CD8-positive, alpha-beta memory T cell (primary cell): ENCODE measurements at regions of chr3 and their contacts with region 1.

Region 1: GRCh38 chr3:186617038-186617946 is 4.4 kb downstream of the AHSG start:
- DNase-seq: peak; percentile 76 to 89 (median 79)
- H3K4me3 ChIP-seq: no peak overlapping the region
- H3K4me3 Mint-ChIP-seq: peak overlapping the region; percentile 16 to 84 (median 68)
- H3K27ac ChIP-seq: no peak overlapping the region
- H3K27ac Mint-ChIP-seq: peak overlapping the region in 3 of 8 donors; percentile 51 to 71 (median 63)
- H3K4me1 ChIP-seq: peaks cover 13% of the 10 kb centered on the region
- H3K4me1 Mint-ChIP-seq: peaks cover 19 to 25% (median 21%) of the 10 kb centered on the region in 3 donors
- H3K27me3 ChIP-seq: peaks cover 15% of the 10 kb centered on the region
- H3K27me3 Mint-ChIP-seq: peaks cover 20 to 42% of the 10 kb centered on the region in 2 donors

Region 2: GRCh38 chr3:185942907-185943759 is 674.2 kb before region 1 on chr3:
- CTCF ChIA-PET with region 1: interaction called, 14 read pairs
- POLR2A ChIA-PET with region 1: interaction called, 3 read pairs
- DNase-seq: peak; percentile 77 to 86 (median 79)
- H3K4me3 ChIP-seq: peak overlapping the region; percentile 26
- H3K4me3 Mint-ChIP-seq: peak overlapping the region; percentile 8 to 71 (median 55)
- H3K27ac ChIP-seq: no peak overlapping the region
- H3K27ac Mint-ChIP-seq: peak overlapping the region in 7 of 8 donors; percentile 5 to 74 (median 62)
- H3K4me1 ChIP-seq: peaks cover 7% of the 10 kb centered on the region
- H3K4me1 Mint-ChIP-seq: peaks cover 13 to 24% (median 18%) of the 10 kb centered on the region in 3 donors
- H3K27me3 ChIP-seq: no peaks in the 10 kb centered on the region
- H3K27me3 Mint-ChIP-seq: peaks cover 5 to 12% of the 10 kb centered on the region in 2 donors

Region 3: DNA sequence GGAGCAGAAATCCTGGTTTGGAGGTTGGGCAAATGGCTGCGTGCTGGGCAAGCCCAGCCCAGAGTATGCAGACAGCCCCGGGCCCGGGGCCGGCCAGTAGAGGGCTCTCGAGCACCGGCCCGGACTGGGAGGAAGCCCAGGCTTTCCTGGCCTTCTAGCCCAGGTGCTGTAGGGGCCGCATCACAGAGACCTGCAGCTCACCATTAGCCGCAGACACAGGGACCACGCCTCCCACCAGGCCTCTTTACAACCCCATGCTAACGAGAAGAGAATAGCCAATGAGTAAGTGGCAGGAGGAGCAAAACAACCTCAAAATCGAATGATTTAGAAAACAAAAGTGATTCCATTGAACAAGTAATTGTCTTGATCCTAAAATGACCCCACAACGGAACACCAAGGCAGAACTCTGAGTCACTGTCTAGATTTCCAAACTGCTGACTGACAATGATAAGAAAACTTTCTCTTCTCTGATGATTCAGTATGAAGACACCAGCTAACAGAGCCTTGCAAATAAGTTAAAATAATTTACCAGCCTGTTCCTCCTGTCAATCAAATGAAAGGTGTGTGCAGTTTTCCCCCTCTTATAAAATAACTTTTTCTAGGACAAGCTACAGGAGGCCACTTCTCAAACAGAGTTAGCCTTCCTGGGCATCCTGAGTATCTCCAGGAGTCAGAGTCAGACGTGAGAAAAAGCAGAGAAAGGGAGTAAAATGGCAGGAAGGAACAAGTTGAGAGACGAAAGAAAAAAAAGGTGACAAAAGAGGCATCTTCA is 357.5 kb before region 1 on chr3:
- CTCF ChIA-PET with region 1: interaction called, 13 read pairs
- POLR2A ChIA-PET with region 1: no interaction called
- DNase-seq: peak; percentile 37 to 72 (median 50)
- H3K4me3 ChIP-seq: no peak overlapping the region
- H3K4me3 Mint-ChIP-seq: peak overlapping the region in 3 of 7 donors; percentile 30 to 56 (median 44)
- H3K27ac ChIP-seq: no peak overlapping the region
- H3K27ac Mint-ChIP-seq: peak overlapping the region in 4 of 8 donors; percentile 25 to 84 (median 56)
- H3K4me1 ChIP-seq: peaks cover 4% of the 10 kb centered on the region
- H3K4me1 Mint-ChIP-seq: peaks cover 8 to 13% (median 11%) of the 10 kb centered on the region in 3 donors
- H3K27me3 ChIP-seq: no peaks in the 10 kb centered on the region
- H3K27me3 Mint-ChIP-seq: peaks cover 2 to 4% of the 10 kb centered on the region in 2 donors

Region 4: DNA sequence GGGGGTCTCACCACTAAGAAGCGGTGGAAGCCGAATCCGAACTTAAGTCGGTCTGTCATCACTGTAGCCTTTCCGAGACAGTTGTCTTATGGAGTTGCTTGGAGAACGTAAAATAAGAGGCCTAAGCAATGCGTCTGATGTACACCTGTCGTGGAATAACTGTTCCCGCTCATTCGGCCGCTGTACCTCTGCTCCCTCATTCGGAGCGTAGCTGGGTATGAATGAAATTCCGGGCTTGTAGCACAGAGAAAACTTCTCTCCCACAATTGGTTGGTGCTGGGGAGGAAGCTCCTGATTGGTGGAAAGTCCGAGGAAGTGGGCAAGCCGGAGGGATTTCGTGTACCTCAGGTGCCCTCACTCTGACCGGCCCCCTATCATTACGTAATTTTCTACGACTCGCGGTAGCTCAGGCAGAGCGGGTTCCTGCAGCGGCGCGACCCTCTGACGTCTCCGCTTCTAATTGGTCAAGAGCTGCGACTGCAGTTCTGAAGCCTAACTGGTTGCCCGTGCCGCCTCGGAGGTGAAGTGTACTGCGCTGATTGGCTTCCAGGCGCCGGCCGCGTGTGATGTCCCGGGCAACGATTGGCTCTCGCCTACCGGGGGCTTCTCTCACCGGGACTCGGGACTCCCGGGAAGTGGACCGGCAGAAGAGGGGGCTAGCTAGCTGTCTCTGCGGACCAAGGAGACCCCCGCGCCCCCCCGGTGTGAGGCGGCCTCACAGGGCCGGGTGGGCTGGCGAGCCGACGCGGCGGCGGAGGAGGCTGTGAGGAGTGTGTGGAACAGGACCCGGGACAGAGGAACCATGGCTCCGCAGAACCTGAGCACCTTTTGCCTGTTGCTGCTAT is 47.0 kb before region 1 on chr3 and contains the start of gene DNAJB11:
- CTCF ChIA-PET with region 1: interaction called, 15 read pairs
- POLR2A ChIA-PET with region 1: interaction called, 4 read pairs
- DNase-seq: peak; percentile 98 to 99 (median 99)
- H3K4me3 ChIP-seq: peak within 1 kb of the TSS; percentile 77
- H3K4me3 Mint-ChIP-seq: peak within 1 kb of the TSS; percentile 86 to 99 (median 89)
- H3K27ac ChIP-seq: peak within 1 kb of the TSS; percentile 98
- H3K27ac Mint-ChIP-seq: peak within 1 kb of the TSS; percentile 93 to 100 (median 98)
- H3K4me1 ChIP-seq: peaks cover 38% of the 10 kb centered on the region
- H3K4me1 Mint-ChIP-seq: peaks cover 56 to 75% (median 72%) of the 10 kb centered on the region in 3 donors
- H3K27me3 ChIP-seq: no peaks in the 10 kb centered on the region
- H3K27me3 Mint-ChIP-seq: no peaks in the 10 kb centered on the region
- total RNA-seq, gene DNAJB11: 62.7 to 65.6 TPM

Region 5: DNA sequence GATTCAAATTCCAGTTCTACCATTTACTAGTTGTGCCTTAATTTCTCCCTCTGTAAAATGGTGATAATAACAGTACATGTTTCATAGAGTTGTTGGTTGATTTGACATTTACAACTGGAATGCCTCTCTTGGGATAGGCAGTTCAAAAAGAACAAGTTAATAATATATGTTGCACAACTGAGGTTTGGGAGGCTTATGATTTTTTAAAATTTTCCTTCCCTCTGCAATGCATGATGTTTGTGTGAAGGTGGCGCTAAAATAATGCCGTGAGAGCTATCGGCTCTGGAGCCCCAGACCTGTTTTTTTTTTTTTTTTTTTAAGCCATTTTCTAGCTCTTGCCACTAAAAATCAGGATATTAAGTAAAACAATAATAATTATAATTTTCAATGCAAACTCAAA is 28.2 kb before region 1 on chr3:
- CTCF ChIA-PET with region 1: interaction called, 15 read pairs
- POLR2A ChIA-PET with region 1: no interaction called
- DNase-seq: no peak
- H3K4me3 ChIP-seq: no peak overlapping the region
- H3K4me3 Mint-ChIP-seq: no peak overlapping the region
- H3K27ac ChIP-seq: no peak overlapping the region
- H3K27ac Mint-ChIP-seq: no peak overlapping the region
- H3K4me1 ChIP-seq: no peaks in the 10 kb centered on the region
- H3K4me1 Mint-ChIP-seq: peaks cover 7 to 18% (median 9%) of the 10 kb centered on the region in 3 donors
- H3K27me3 ChIP-seq: no peaks in the 10 kb centered on the region
- H3K27me3 Mint-ChIP-seq: no peaks in the 10 kb centered on the region

Region 6: GRCh38 chr3:186633481-186633880 is 16.2 kb after region 1 on chr3:
- CTCF ChIA-PET with region 1: interaction called, 11 read pairs
- POLR2A ChIA-PET with region 1: no interaction called
- DNase-seq: no peak
- H3K4me3 ChIP-seq: no peak overlapping the region
- H3K4me3 Mint-ChIP-seq: no peak overlapping the region
- H3K27ac ChIP-seq: no peak overlapping the region
- H3K27ac Mint-ChIP-seq: no peak overlapping the region
- H3K4me1 ChIP-seq: no peaks in the 10 kb centered on the region
- H3K4me1 Mint-ChIP-seq: no peaks in the 10 kb centered on the region
- H3K27me3 ChIP-seq: no peaks in the 10 kb centered on the region
- H3K27me3 Mint-ChIP-seq: peaks cover 4 to 31% of the 10 kb centered on the region in 2 donors

Region 7: DNA sequence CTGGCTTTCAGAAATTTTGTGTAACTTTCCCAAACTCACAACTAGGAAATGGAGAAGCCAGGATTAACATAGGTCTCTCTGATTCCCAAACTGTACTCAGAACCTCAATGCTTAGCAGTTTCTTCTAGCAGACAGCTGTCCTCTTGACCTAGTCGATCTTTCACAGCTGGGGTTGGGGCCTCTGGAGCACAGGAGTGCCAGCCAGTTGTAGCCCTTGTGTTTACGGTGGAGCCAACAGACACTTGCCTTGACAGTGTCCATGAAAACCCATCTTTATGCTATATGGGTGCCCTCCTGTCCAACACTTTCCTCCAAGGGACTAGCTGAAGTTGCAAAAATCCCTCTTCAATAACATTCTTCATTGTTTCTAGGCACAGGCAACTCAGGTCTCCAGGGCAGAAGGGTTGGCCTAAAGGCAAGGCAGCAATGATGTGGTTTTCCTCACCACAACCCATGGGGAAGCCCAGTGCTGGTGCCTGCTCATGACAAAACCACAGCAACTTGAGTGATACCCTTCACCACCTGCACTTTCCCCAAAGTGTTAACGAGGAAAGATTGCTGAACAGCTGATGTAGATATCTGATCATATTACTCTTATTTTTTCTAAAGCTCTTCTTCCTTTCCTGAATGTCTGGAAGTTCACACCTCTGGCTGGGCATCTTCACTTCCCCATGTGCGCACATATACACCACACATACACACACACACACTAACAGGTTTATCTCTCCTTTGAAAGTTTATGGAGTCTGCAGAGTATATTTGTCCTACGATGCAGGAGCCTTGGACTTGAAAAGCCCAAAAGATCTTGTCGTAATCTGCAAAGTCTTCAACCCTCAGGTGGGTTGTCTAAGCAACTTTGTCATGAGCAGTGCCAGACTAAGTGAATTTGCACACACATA is 88.8 kb after region 1 on chr3:
- CTCF ChIA-PET with region 1: no interaction called
- POLR2A ChIA-PET with region 1: no interaction called
- DNase-seq: peak in 4 of 5 donors; percentile 4 to 49 (median 16)
- H3K4me3 ChIP-seq: no peak overlapping the region
- H3K4me3 Mint-ChIP-seq: peak overlapping the region in 1 of 7 donors; percentile 49
- H3K27ac ChIP-seq: no peak overlapping the region
- H3K27ac Mint-ChIP-seq: peak overlapping the region in 1 of 8 donors; percentile 34
- H3K4me1 ChIP-seq: no peaks in the 10 kb centered on the region
- H3K4me1 Mint-ChIP-seq: peaks cover 10 to 12% (median 11%) of the 10 kb centered on the region in 3 donors
- H3K27me3 ChIP-seq: peaks cover 4% of the 10 kb centered on the region
- H3K27me3 Mint-ChIP-seq: peaks cover 29 to 48% of the 10 kb centered on the region in 2 donors

Region 8: DNA sequence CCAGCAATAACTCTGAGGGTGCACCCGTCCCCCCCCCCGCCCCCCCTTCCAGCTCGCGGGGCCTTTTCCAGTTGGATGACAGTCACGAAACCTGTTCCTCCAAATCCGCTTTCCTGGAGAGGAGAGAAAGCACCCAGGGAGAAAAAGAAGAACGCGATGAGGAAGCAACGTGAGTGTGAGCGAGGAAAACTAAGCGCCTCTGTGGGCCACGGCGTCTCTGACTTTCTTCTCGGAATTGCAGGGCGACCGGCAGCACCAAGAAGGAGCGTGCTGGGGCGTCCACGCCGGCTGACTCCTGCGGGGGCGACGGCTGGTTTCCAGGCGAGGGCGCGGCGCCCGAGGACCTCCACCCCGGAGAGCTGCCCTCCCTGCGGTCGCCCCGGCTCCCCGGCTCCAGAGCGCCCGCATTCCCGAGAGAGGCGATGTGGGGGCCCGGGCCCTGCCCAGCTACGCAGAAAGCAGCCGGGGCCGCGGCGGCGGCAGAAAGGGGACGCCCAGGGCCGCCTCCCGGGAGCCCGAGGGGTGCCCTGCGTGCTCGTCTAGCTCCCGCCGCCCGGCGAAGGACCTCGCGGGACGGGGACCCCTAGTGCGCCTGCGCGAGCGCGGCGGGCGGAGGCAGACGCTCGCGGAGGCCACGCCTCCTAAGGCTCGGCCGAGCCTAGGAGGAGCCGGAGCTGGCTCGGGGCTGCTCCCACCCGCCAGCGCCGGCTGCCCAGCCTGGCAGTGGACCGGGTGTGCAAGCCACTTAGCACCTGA is 209.9 kb after region 1 on chr3:
- CTCF ChIA-PET with region 1: interaction called, 217 read pairs
- POLR2A ChIA-PET with region 1: no interaction called
- DNase-seq: peak; percentile 82 to 92 (median 85)
- H3K4me3 ChIP-seq: peak overlapping the region; percentile 68
- H3K4me3 Mint-ChIP-seq: peak overlapping the region; percentile 62 to 89 (median 71)
- H3K27ac ChIP-seq: no peak overlapping the region
- H3K27ac Mint-ChIP-seq: peak overlapping the region in 1 of 8 donors; percentile 73
- H3K4me1 ChIP-seq: peaks cover 23% of the 10 kb centered on the region
- H3K4me1 Mint-ChIP-seq: peaks cover 8 to 25% (median 11%) of the 10 kb centered on the region in 3 donors
- H3K27me3 ChIP-seq: peaks cover 28% of the 10 kb centered on the region
- H3K27me3 Mint-ChIP-seq: peaks cover 28 to 49% of the 10 kb centered on the region in 2 donors